ENCODE measurements at regions of chr5 and their contacts with region 1.

Region 1: DNA sequence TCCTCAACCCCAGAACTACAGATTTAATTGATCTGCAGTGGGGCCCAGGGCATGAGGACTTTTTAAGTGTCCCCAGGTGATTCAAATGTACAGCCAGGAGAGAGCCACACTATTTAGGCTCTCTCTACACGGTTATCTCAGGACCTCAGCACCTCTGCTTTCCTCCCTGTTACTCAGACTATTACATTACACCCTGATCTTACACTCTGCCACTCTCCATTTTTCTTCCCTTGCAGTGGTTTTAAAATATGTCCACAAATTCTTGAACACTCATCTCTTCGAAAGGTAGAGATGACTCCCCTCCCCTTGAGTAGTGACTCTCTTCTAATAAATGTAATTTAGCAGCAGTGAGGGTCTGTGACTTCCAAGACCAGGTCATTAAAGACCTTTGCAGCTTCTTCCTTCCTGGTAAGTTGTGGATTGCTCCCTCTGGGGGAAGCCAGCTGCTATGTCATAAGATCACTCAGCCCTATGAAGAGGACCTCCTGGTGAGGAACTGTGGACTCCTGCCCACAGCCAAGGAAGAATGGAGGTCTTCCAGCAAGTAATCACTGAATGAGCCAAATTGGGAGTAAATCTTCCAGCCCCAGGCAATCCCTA is 87.5 kb upstream of the SSBP2 start:
- DNase-seq: peak in 5 of 9 experiments; percentile 7 to 63 (median 36)
- ATAC-seq: peak; percentile 52
- H3K4me3 ChIP-seq: no peak overlapping the region
- H3K4me3 Mint-ChIP-seq: no peak overlapping the region
- H3K27ac ChIP-seq: no peak overlapping the region
- H3K27ac Mint-ChIP-seq: no peak overlapping the region
- H3K4me1 ChIP-seq: peaks cover 5% of the 10 kb centered on the region
- H3K4me1 Mint-ChIP-seq: peaks cover 5% of the 10 kb centered on the region
- H3K27me3 ChIP-seq: no peaks in the 10 kb centered on the region
- H3K27me3 Mint-ChIP-seq: no peaks in the 10 kb centered on the region
- CTCF ChIP-seq: peak; percentile 53

Region 2: DNA sequence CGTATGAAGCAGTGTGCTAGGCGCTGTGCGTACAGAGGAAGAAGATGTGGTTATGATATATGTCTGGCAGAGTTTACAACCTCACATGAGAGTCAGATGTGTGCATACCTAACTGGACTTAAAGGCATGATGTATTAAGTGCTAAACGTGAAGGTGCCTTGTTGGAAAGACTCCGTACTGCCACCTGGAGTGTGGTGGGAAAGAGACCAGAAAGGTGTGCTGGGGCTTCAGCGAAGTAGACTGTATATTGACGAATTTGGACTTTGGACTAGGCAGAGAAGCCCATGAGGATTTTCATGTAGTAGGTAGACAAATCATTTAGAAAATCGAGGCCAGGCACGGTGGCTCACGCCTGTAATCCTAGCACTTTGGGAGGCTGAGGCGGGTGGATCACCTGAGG is 1158.8 kb before region 1 on chr5:
- CTCF ChIA-PET with region 1: no interaction called
- POLR2A ChIA-PET with region 1: no interaction called
- intact Hi-C with region 1: no loop called
- DNase-seq: no peak
- ATAC-seq: no peak
- H3K4me3 ChIP-seq: no peak overlapping the region
- H3K4me3 Mint-ChIP-seq: no peak overlapping the region
- H3K27ac ChIP-seq: no peak overlapping the region
- H3K27ac Mint-ChIP-seq: no peak overlapping the region
- H3K4me1 ChIP-seq: no peaks in the 10 kb centered on the region
- H3K4me1 Mint-ChIP-seq: peaks cover 2% of the 10 kb centered on the region
- H3K27me3 ChIP-seq: no peaks in the 10 kb centered on the region
- H3K27me3 Mint-ChIP-seq: no peaks in the 10 kb centered on the region
- CTCF ChIP-seq: no peak

Region 3: DNA sequence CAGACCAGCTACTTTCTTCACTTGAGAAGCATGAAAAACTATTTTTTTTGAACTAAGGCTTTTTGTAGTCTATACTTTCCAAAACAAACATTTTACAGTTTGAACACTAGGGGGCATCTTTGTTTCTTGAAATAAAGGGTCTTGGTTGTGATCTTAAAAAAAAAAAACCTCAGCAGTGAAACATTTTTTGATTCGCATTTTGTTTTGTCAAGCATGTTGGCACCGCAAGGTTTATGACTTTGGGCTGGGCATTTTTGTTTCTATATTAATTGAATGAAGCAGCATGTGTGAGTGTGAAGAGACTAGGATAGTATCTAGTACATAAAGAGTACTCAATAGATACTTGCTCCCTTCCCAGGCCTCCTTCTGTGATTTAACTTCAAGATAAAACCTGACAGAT is 412.8 kb before region 1 on chr5:
- CTCF ChIA-PET with region 1: interaction called, 11 read pairs
- POLR2A ChIA-PET with region 1: no interaction called
- intact Hi-C with region 1: loop called (anchors 1 to 2 kb)
- DNase-seq: peak in 2 of 9 experiments; percentile 42 to 57
- ATAC-seq: peak; percentile 49
- H3K4me3 ChIP-seq: no peak overlapping the region
- H3K4me3 Mint-ChIP-seq: no peak overlapping the region
- H3K27ac ChIP-seq: no peak overlapping the region
- H3K27ac Mint-ChIP-seq: no peak overlapping the region
- H3K4me1 ChIP-seq: no peaks in the 10 kb centered on the region
- H3K4me1 Mint-ChIP-seq: peaks cover 7% of the 10 kb centered on the region
- H3K27me3 ChIP-seq: no peaks in the 10 kb centered on the region
- H3K27me3 Mint-ChIP-seq: no peaks in the 10 kb centered on the region
- CTCF ChIP-seq: peak; percentile 71

Region 4: GRCh38 chr5:81506900-81507588 is 331.4 kb before region 1 on chr5:
- CTCF ChIA-PET with region 1: interaction called, 10 read pairs
- POLR2A ChIA-PET with region 1: no interaction called
- intact Hi-C with region 1: loop called (anchors 1 to 2 kb)
- DNase-seq: peak in 7 of 9 experiments; percentile 2 to 72 (median 28)
- ATAC-seq: peak; percentile 65
- H3K4me3 ChIP-seq: no peak overlapping the region
- H3K4me3 Mint-ChIP-seq: no peak overlapping the region
- H3K27ac ChIP-seq: no peak overlapping the region
- H3K27ac Mint-ChIP-seq: no peak overlapping the region
- H3K4me1 ChIP-seq: no peaks in the 10 kb centered on the region
- H3K4me1 Mint-ChIP-seq: no peaks in the 10 kb centered on the region
- H3K27me3 ChIP-seq: no peaks in the 10 kb centered on the region
- H3K27me3 Mint-ChIP-seq: no peaks in the 10 kb centered on the region
- CTCF ChIP-seq: peak; percentile 66

Region 5: GRCh38 chr5:81825237-81825636 is 13.2 kb before region 1 on chr5:
- CTCF ChIA-PET with region 1: interaction called, 11 read pairs
- POLR2A ChIA-PET with region 1: no interaction called
- intact Hi-C with region 1: no loop called
- DNase-seq: no peak
- ATAC-seq: no peak
- H3K4me3 ChIP-seq: no peak overlapping the region
- H3K4me3 Mint-ChIP-seq: no peak overlapping the region
- H3K27ac ChIP-seq: no peak overlapping the region
- H3K27ac Mint-ChIP-seq: no peak overlapping the region
- H3K4me1 ChIP-seq: no peaks in the 10 kb centered on the region
- H3K4me1 Mint-ChIP-seq: peaks cover 10% of the 10 kb centered on the region
- H3K27me3 ChIP-seq: no peaks in the 10 kb centered on the region
- H3K27me3 Mint-ChIP-seq: no peaks in the 10 kb centered on the region
- CTCF ChIP-seq: no peak